Right lobe of liver (tissue), 6 donors: ENCODE measurements at regions of chr4 and their contacts with region 1.

Region 1: DNA sequence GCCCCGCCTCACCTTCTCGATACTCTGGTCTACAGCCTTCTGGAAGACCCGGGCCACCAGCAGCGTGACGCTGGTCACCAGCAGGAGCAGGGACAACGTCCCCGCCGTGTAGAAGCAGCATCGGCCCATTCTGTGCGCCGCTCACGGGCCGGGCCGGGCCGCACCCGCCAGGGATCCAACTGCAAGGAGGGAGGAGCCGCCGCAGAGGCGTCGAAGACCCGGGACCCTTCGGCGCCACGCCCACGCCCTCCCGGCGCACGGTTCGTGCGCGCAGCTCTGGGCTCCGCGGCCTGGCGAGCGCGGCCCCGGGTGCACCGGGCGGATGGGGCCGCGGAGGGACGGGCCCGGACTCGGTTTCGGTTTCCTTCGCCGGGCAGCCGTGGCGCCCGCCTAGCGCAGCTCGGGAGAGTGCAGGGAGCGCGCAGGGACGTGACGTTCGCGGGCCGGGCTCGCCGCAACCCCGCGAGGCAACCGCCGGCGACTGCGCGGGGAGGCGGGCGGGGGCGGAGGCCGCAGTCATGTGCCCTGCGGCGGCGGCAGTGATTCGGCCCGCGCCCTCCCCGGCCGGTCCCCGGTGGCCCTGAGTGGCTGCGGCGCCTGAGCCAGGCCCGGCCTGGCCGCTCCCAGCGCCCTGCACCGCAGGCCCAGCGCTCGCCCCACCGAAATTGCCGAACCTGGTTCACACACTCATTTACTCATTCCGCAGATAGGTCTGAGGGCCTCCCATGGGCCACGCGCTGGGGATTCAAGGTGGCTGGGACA is at the start of gene SCARB2:
- DNase-seq: peak; percentile 93 to 94 (median 93)
- ATAC-seq: peak; percentile 75 to 92 (median 85)
- H3K4me3 ChIP-seq: peak within 1 kb of the TSS; percentile 63 to 80 (median 79)
- H3K27ac ChIP-seq: peak within 1 kb of the TSS; percentile 92 to 99 (median 93)
- H3K4me1 ChIP-seq: peaks cover 0 to 78% (median 35%) of the 10 kb centered on the region in 4 donors
- H3K27me3 ChIP-seq: no peaks in the 10 kb centered on the region
- CTCF ChIP-seq: no peak
- POLR2A ChIP-seq: peak; percentile 97
- total RNA-seq, gene SCARB2: 102 to 133 (median 125) TPM

Region 2: GRCh38 chr4:76305971-76306881 is 92.6 kb after region 1 on chr4 and contains the start of gene STBD1:
- intact Hi-C with region 1: loop called in 1 of 2 experiments (anchors 10 kb)
- DNase-seq: peak; percentile 94 to 97 (median 95)
- ATAC-seq: peak; percentile 70 to 84 (median 79)
- H3K4me3 ChIP-seq: peak within 1 kb of the TSS; percentile 65 to 89 (median 68)
- H3K27ac ChIP-seq: peak within 1 kb of the TSS; percentile 95 to 99 (median 99)
- H3K4me1 ChIP-seq: peaks cover 0 to 32% (median 4%) of the 10 kb centered on the region in 4 donors
- H3K27me3 ChIP-seq: no peaks in the 10 kb centered on the region
- CTCF ChIP-seq: peak in 1 of 4 donors; percentile 5
- POLR2A ChIP-seq: peak; percentile 87
- total RNA-seq, gene STBD1: 16.3 to 53.5 (median 37.6) TPM